Cardiac septum (tissue), 1 donor: ENCODE measurements at regions of chr3 and their contacts with region 1.

Region 1: DNA sequence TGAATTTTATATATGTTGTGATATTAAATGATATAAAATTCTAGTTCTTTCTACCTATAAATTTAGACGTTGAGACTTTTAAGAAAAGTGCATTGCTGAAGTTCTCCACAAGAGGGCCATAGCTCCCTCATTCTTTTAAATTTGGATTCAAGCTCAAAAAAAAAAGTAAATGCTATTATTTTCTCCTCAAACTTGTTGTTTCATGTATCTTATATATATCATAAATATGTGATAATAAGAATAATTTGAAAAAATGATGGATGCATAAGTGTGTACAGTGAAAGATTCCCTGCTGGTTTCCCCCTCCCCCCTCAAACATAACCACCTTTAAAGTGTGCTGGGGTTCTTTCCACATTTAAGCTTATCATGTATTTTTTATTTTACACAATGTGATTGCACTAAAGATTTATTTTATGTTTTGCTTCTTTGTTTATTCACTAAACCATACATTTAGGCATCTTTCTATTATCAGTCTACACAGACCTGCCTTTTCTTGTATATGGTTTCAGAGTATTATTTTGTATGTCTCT is 769.4 kb upstream of the GOLIM4 start:
- DNase-seq: no peak

Region 2: GRCh38 chr3:168615493-168616020 is 249.5 kb before region 1 on chr3:
- intact Hi-C with region 1: no loop called
- DNase-seq: no peak

Region 3: DNA sequence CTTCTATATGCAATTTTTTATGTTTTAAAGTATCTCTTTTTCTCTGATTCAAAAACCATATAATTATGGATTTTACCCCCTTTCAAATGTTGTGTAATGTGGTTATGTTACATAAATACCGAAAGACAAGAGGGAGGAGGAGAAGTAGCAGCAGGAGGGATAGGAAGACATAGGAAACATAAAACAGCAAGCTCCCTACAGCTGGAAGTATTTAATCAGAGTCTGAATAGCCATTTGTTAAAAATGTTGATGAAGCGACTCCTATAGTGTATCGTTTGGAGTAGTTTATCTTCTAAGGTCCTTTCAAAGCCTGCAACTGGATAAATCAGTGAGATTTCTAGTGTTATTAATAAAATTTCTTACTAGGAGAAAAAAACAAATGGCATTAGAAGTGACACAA is 171.2 kb before region 1 on chr3:
- intact Hi-C with region 1: no loop called
- DNase-seq: no peak

Region 4: GRCh38 chr3:168933614-168934013 is 68.5 kb after region 1 on chr3:
- intact Hi-C with region 1: no loop called
- DNase-seq: no peak

Region 5: DNA sequence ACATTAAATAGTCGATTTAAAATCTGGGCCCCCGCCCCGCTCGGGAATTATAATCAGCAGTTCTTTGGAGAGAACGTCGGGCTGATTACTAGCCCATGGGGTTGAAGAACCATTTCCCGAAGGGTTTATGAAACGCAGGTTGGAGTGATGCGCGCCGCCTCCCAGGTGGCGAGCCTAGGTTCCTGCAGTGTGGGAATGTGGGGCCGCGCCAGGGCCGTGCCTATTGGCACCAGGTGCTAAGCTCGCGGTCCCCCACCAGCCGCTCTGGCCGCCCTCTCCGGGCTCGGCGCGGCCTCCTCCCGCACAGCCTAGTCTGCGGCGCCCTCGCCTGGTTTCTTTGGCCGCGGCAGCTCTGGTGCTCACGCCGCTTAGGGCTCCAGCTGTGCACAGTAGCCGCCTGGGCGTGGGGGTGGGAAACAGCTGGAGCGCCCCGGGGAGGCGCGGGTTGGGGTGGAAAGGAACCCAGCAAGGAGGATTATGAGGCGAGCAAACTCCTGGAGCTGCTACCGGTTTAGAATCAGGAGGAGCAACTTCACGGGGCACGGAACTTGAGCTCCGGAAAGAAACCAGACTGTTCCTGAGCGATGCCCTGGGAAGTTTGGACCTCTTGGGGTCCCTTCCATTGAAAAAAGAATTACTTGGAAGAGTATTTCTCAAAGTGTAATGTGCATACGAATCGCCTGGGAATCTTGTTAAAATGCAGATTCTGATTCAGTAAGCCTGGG is 804.0 kb after region 1 on chr3:
- intact Hi-C with region 1: loop called (anchors 5 kb)
- DNase-seq: peak; percentile 85